Tibial artery (tissue), 4 donors: ENCODE measurements at regions of chr17 and their contacts with region 1.

Region 1: DNA sequence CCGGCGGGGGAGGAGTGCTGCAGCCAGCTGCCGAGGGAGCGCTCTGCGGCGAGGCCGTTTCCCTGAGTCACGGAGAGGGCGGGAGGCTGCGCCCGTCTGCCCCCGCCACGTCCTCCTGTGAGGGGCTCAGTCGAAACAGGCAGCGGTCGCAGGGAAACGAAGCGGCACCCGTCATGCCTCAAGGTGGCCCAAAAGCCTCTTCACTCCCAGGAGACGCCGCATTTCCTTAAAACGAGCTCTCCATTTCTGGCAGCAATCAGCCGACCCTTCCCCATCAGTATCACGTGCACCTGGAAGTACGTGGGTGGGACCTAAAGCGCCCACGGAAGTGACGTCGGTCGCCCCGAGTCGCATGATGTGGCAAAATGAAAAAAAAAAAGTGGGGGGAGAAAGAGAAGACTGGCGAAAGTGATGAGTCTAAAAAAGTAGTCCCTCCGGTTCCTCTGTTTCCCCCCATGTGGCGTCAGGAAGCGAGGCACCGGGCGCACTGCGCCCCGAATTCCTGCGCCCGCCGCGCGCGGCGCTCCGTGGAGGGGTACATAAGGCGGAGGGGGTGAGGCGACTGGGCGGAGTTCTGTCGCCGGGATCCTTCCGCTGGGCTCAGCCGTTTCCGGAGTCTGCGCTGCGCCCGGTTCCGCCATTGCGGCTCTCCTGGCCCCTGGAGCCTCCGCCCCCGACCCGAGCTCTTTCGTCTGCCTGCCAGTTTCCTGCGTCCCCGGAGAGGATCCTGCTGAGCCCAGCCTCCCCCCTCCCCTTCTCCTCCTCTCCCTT is at the start of gene CLTC:
- DNase-seq: peak; percentile 93 to 96
- H3K4me3 ChIP-seq: peak within 1 kb of the TSS; percentile 96 to 97
- H3K27ac ChIP-seq: peak within 1 kb of the TSS; percentile 98 to 99
- H3K4me1 ChIP-seq: peaks cover 0 to 42% (median 28%) of the 10 kb centered on the region in 4 donors
- H3K27me3 ChIP-seq: no peaks in the 10 kb centered on the region
- CTCF ChIP-seq: no peak

Region 2: DNA sequence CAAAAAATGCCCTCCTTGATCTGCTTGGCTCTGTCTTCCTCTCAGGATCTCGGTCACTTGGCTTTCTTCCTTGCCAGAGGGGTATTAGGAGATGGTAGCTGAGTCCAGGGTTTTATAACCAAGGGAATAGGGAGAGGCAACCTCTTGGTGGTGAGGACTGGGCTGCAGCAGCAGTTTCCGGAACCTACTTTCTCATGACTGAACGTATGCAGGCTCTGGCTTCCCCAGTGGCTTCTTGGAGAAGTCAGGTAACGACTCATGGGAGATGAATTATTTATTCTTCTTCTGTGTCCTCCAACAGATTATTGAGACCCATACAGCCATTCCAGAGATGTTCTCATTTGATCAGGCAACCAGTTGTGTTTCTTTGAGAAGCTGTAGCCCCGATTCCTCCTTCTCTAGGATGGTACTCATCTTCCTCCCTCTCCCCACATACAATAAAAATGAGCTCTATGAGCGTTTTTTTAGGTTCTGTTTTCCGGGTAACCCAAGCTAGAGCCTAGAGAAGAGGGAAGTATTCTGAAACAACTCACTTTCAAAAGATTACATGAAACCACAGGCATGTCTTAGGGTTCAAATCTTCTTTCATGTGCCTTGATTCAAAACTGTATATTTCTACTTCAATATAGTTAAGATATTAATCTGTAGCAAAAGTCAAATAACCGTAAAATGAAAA is 76.4 kb before region 1 on chr17:
- intact Hi-C with region 1: no loop called
- DNase-seq: no peak
- H3K4me3 ChIP-seq: no peak overlapping the region
- H3K27ac ChIP-seq: no peak overlapping the region
- H3K4me1 ChIP-seq: peaks cover 0 to 7% (median 0%) of the 10 kb centered on the region in 4 donors
- H3K27me3 ChIP-seq: no peaks in the 10 kb centered on the region
- CTCF ChIP-seq: no peak

Region 3: GRCh38 chr17:59565171-59565969 is 54.1 kb before region 1 on chr17 and contains the start of gene DHX40:
- intact Hi-C with region 1: loop called (anchors 10 kb)
- DNase-seq: peak; percentile 94 to 96
- H3K4me3 ChIP-seq: peak within 1 kb of the TSS; percentile 87 to 98
- H3K27ac ChIP-seq: peak within 1 kb of the TSS; percentile 88 to 96
- H3K4me1 ChIP-seq: peaks cover 0 to 13% (median 4%) of the 10 kb centered on the region in 4 donors
- H3K27me3 ChIP-seq: no peaks in the 10 kb centered on the region
- CTCF ChIP-seq: no peak

Region 4: GRCh38 chr17:59643228-59644140 is 24.0 kb after region 1 on chr17:
- intact Hi-C with region 1: no loop called
- DNase-seq: no peak
- H3K4me3 ChIP-seq: no peak overlapping the region
- H3K27ac ChIP-seq: no peak overlapping the region
- H3K4me1 ChIP-seq: peaks cover 0 to 64% (median 22%) of the 10 kb centered on the region in 4 donors
- H3K27me3 ChIP-seq: no peaks in the 10 kb centered on the region
- CTCF ChIP-seq: no peak

Region 5: DNA sequence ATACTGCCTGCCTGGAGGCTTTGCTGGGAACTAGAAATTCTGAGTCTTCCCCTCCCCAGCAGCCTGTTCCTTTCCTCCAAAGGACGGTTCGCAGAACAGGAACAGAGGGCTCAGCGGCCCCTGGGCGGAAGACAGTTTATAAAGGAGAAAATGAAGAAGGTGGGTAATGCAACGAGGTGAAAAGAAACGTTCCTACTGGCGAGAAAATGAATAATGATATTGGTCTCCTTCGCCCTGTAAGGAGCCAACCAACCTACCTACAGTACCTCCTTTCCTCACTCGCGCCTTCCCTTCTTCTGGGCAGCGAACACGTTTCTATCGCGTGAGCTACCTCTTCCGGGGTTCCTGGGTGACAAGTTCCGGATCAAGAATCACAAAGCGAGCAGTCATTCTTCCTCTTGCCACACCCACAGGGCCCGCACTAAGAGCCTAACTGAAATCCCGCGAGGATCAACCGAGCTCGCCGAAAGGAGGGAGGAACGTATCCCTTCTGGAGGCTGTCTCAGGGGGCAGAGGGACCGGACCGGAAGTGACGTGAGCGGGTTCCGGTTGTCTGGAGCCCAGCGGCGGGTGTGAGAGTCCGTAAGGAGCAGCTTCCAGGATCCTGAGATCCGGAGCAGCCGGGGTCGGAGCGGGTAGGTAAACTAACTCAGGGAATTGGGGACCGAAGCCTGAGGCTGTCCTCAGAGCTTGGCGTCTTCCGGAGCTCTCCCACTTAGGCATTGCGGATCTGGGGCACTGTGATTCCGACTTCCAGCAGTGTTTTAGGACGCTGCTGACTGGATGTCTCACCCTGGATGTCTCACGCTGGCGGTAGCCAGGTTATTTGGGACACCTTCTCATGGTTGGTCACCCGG is 87.9 kb after region 1 on chr17 and contains the starts of genes PTRH2 and VMP1:
- intact Hi-C with region 1: loop called (anchors 2 kb)
- DNase-seq: peak; percentile 98 to 99
- H3K4me3 ChIP-seq: peak within 1 kb of the TSS; percentile 65 to 78
- H3K27ac ChIP-seq: peak within 1 kb of the TSS; percentile 88 to 89
- H3K4me1 ChIP-seq: peaks cover 6 to 38% (median 20%) of the 10 kb centered on the region in 4 donors
- H3K27me3 ChIP-seq: no peaks in the 10 kb centered on the region
- CTCF ChIP-seq: no peak